ENCODE measurements at regions of chr11 and their contacts with region 1.

Region 1: GRCh38 chr11:33362051-33362910 is 105.1 kb downstream of the HIPK3 start:
- DNase-seq: peak; percentile 27
- ATAC-seq: peak; percentile 67
- H3K4me3 ChIP-seq: no peak overlapping the region
- H3K27ac ChIP-seq: no peak overlapping the region
- H3K4me1 ChIP-seq: no peaks in the 10 kb centered on the region
- H3K27me3 ChIP-seq: no peaks in the 10 kb centered on the region
- CTCF ChIP-seq: peak; percentile 51
- EP300 ChIP-seq: no peak
- POLR2A ChIP-seq: no peak
- RAD21 ChIP-seq: 0 out of 2 replicates have a peak, but pooled peaks have one; percentile 38

Region 2: DNA sequence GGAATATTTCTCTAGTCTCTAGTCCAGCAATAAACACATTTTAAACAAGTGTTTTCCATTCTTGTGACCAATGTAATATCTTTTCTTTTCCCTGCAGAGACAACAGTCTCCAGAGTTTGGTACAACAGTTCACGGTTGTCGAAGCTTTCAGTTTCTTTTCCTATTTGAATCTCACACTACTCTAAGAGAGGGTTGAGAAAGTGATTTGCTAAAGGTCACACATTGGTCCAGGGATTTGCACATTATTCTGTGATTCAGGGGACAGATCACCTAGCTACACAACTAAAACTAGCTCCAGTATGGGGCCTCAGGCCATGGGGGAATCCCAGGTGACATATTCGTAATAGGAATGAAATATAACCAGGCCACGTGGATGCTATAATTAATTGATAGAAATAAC is 27.4 kb after region 1 on chr11:
- CTCF ChIA-PET with region 1: no interaction called
- POLR2A ChIA-PET with region 1: no interaction called
- in situ Hi-C with region 1: no loop called
- intact Hi-C with region 1: no loop called
- DNase-seq: no peak
- ATAC-seq: no peak
- H3K4me3 ChIP-seq: no peak overlapping the region
- H3K27ac ChIP-seq: no peak overlapping the region
- H3K4me1 ChIP-seq: no peaks in the 10 kb centered on the region
- H3K27me3 ChIP-seq: peaks cover 0 to 19% of the 10 kb centered on the region in 2 experiments; a peak in 3 of 5 replicates
- CTCF ChIP-seq: no peak
- EP300 ChIP-seq: no peak
- POLR2A ChIP-seq: no peak
- RAD21 ChIP-seq: no peak

Region 3: GRCh38 chr11:33542921-33543320 is 180.6 kb after region 1 on chr11:
- CTCF ChIA-PET with region 1: no interaction called
- POLR2A ChIA-PET with region 1: no interaction called
- in situ Hi-C with region 1: no loop called
- intact Hi-C with region 1: loop called (anchors 2 kb)
- DNase-seq: peak; percentile 23
- ATAC-seq: peak; percentile 84
- H3K4me3 ChIP-seq: no peak overlapping the region
- H3K27ac ChIP-seq: no peak overlapping the region
- H3K4me1 ChIP-seq: no peaks in the 10 kb centered on the region
- H3K27me3 ChIP-seq: peaks cover 0 to 40% of the 10 kb centered on the region in 2 experiments; a peak in 3 of 5 replicates
- CTCF ChIP-seq: peak; percentile 68
- EP300 ChIP-seq: no peak
- POLR2A ChIP-seq: no peak
- RAD21 ChIP-seq: 0 out of 2 replicates have a peak, but pooled peaks have one; percentile 20